ENCODE measurements at regions of chr17 and their contacts with region 1.

Region 1: GRCh38 chr17:63445979-63446691 is at the start of gene CYB561:
- DNase-seq: peak; percentile 87
- H3K4me3 ChIP-seq: peak within 1 kb of the TSS; percentile 78 to 83
- H3K27ac ChIP-seq: peak within 1 kb of the TSS; percentile 95 to 97
- H3K4me1 ChIP-seq: peaks cover 14% of the 10 kb centered on the region
- H3K27me3 ChIP-seq: no peaks in the 10 kb centered on the region
- CTCF ChIP-seq: peak in 3 of 4 experiments; percentile 28 to 56 (median 53)
- POLR2A ChIP-seq: peak; percentile 55
- total RNA-seq, gene CYB561: 76.9 to 170 TPM

Region 2: GRCh38 chr17:63232565-63233310 is 213.4 kb before region 1 on chr17:
- intact Hi-C with region 1: no loop called
- DNase-seq: no peak
- H3K4me3 ChIP-seq: no peak overlapping the region
- H3K27ac ChIP-seq: no peak overlapping the region
- H3K4me1 ChIP-seq: no peaks in the 10 kb centered on the region
- H3K27me3 ChIP-seq: no peaks in the 10 kb centered on the region
- CTCF ChIP-seq: no peak
- POLR2A ChIP-seq: no peak

Region 3: GRCh38 chr17:63549946-63550807 is 104.0 kb after region 1 on chr17 and contains the start of gene DCAF7:
- intact Hi-C with region 1: loop called (anchors 5 kb)
- DNase-seq: peak; percentile 100
- H3K4me3 ChIP-seq: peak within 1 kb of the TSS; percentile 73 to 84
- H3K27ac ChIP-seq: peak within 1 kb of the TSS; percentile 81 to 83
- H3K4me1 ChIP-seq: peaks cover 4% of the 10 kb centered on the region
- H3K27me3 ChIP-seq: no peaks in the 10 kb centered on the region
- CTCF ChIP-seq: peak in 2 of 4 experiments; percentile 7 to 20
- POLR2A ChIP-seq: peak; percentile 65
- total RNA-seq, gene DCAF7: 48.9 to 68.6 TPM

Region 4: DNA sequence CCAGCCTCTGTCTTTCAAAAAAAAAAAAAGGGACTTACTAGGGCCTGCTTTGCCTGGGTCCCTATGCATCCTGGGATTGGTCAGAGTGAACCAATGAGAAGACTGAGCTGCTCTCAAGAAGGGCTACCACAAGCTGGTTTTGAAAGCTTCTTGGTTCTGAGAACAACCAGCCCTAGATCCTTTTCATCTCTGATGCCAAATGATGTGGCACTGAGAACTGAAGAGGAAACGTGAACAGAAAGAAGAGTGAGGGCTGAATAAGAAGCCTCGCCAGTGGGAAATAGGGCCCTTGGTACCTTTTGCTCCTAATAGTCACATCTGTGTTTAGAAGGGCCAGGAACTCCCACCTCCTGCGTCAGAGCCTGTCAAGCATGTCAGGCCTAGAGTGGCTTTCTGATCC is 165.2 kb after region 1 on chr17:
- intact Hi-C with region 1: no loop called
- DNase-seq: no peak
- H3K4me3 ChIP-seq: no peak overlapping the region
- H3K27ac ChIP-seq: no peak overlapping the region
- H3K4me1 ChIP-seq: no peaks in the 10 kb centered on the region
- H3K27me3 ChIP-seq: no peaks in the 10 kb centered on the region
- CTCF ChIP-seq: no peak
- POLR2A ChIP-seq: no peak